Heart right ventricle (tissue), 16 donors: ENCODE measurements at regions of chr3 and their contacts with region 1.

Region 1: DNA sequence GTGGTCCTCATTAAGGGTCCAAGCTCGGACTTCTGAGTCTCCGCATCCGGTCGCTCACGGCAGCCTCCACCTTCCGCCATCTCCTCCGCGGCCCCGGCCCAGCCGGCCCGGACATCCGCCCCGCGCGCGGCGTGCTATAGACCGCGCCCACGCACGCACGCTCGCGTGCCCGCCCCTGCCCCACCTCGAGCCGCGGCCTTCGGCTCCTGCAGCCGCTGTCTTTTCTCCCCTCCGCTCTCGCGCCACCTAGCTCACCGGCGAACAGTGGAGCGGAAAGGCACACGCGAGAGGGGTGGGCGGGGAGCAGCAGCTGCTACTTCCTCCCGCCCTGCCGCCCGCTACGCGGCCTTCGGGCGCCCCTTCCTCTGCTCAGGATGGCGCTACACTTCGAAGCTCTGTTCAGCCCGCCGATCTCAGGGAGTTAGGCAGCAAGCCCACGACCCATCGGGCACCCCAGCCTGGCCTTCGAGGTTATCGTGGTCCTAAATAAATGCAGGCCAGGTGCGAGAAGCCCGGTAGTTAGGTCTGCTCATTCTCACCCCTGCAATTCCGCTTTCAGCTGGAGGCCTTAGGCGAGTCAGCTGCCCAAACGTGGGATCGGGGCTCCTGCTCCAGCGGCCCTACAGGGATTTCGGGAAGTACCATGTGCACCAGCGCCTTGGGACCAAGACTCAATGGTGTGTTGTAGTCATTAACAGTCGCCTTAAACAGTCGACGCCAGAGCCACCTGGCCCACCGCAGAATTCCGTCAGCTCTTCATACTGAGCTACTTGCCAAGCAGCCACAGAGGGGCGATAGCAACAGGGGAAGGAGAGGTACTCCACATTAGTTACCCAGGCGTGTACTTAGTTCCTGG is at the start of gene USP4:
- DNase-seq: peak; percentile 91
- ATAC-seq: peak; percentile 95 to 99 (median 96)
- H3K4me3 ChIP-seq: peak within 1 kb of the TSS; percentile 60 to 96 (median 78)
- H3K27ac ChIP-seq: peak within 1 kb of the TSS; percentile 94 to 99 (median 96)
- H3K4me1 ChIP-seq: peaks cover 8 to 77% (median 34%) of the 10 kb centered on the region in 9 donors
- H3K27me3 ChIP-seq: no peaks in the 10 kb centered on the region
- CTCF ChIP-seq: peak in 6 of 9 donors; percentile 20 to 72 (median 52)
- total RNA-seq, gene USP4: 35.4 to 48.3 (median 43.5) TPM

Region 2: GRCh38 chr3:49007068-49007770 is 333.0 kb before region 1 on chr3 and contains the start of gene WDR6:
- intact Hi-C with region 1: no loop called
- DNase-seq: peak; percentile 96 to 97
- ATAC-seq: peak; percentile 91 to 96 (median 93)
- H3K4me3 ChIP-seq: peak within 1 kb of the TSS; percentile 55 to 93 (median 72)
- H3K27ac ChIP-seq: peak within 1 kb of the TSS; percentile 80 to 97 (median 92)
- H3K4me1 ChIP-seq: peaks cover 4 to 32% (median 19%) of the 10 kb centered on the region in 9 donors
- H3K27me3 ChIP-seq: no peaks in the 10 kb centered on the region
- CTCF ChIP-seq: peak in 8 of 9 donors; percentile 9 to 70 (median 53)
- total RNA-seq, gene WDR6: 70.4 to 98.8 (median 76.5) TPM

Region 3: DNA sequence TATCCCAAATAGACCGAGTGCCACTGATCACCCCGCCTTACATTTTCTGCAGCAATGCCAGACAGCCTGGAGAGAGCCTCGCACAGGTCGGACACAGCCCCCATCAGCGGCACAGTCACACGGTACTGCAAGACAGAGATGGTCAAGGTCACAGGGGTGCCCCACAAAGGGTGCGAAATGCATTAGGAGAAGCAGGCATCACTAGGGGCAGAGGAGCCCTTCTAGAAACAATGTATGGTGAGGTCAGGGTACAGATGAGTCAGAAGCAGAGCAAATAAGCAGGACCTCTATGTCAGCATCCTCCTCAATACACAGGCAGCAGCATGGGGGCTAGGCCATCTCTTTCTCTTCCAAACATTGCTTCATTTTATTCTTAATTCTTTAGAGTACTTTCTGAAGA is 41.7 kb before region 1 on chr3:
- intact Hi-C with region 1: no loop called
- DNase-seq: no peak
- ATAC-seq: no peak
- H3K4me3 ChIP-seq: no peak overlapping the region
- H3K27ac ChIP-seq: peak overlapping the region in 1 of 10 donors; percentile 93
- H3K4me1 ChIP-seq: peaks cover 3 to 53% (median 25%) of the 10 kb centered on the region in 9 donors
- H3K27me3 ChIP-seq: no peaks in the 10 kb centered on the region
- CTCF ChIP-seq: no peak

Region 4: DNA sequence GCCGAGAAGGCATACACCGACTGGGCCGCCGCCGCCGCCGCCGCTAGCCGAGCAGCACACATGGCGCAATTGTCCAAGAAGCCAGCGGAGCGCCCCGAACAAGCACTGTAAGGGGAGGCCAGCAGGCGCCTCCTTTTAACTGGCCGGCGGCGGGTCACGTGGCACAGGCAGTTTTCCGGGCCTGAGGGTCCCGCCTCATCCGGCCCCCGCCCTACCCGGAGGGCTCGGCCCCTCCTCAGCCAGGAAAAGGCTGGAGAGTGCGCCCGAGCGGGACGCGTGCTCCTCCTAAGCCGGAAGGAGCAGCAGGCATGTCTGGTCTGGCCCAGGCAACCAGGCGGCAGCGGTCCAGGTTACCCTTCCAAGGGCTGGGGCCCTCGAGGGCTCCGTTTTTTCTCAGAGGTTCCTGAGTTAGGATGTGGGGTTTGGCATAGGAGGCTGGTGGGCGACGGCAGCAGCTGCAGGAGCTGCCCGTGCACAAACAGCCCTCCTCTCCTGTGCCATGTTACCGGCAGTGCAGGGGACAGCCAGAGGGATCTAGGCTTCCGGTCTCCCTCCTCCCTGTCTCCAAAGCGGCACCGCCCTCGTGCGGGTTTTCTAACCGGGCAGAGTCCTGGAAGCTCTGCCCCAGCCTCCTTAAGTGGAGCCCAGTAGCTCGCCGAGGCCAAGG is 18.2 kb after region 1 on chr3 and contains the start of gene GPX1:
- intact Hi-C with region 1: loop called in 1 of 10 experiments (anchors 2 kb)
- DNase-seq: peak; percentile 96
- ATAC-seq: peak; percentile 95 to 97 (median 97)
- H3K4me3 ChIP-seq: peak within 1 kb of the TSS; percentile 60 to 92 (median 81)
- H3K27ac ChIP-seq: peak within 1 kb of the TSS; percentile 74 to 96 (median 92)
- H3K4me1 ChIP-seq: peaks cover 6 to 53% (median 40%) of the 10 kb centered on the region in 9 donors
- H3K27me3 ChIP-seq: no peaks in the 10 kb centered on the region
- CTCF ChIP-seq: no peak
- total RNA-seq, gene GPX1: 85.2 to 223 (median 102) TPM

Region 5: GRCh38 chr3:49411968-49412631 is 71.9 kb after region 1 on chr3 and contains the starts of genes RHOA and TCTA:
- intact Hi-C with region 1: loop called in 6 of 10 experiments (anchors 1 to 5 kb)
- DNase-seq: peak; percentile 99 to 100
- ATAC-seq: peak; percentile 94 to 97 (median 96)
- H3K4me3 ChIP-seq: peak within 1 kb of the TSS; percentile 73 to 99 (median 91)
- H3K27ac ChIP-seq: peak within 1 kb of the TSS; percentile 95 to 99 (median 98)
- H3K4me1 ChIP-seq: peaks cover 11 to 78% (median 68%) of the 10 kb centered on the region in 9 donors
- H3K27me3 ChIP-seq: no peaks in the 10 kb centered on the region
- CTCF ChIP-seq: no peak
- total RNA-seq, gene RHOA: 226 to 335 (median 250) TPM
- total RNA-seq, gene TCTA: 13.9 to 22.6 (median 17.6) TPM

Region 6: DNA sequence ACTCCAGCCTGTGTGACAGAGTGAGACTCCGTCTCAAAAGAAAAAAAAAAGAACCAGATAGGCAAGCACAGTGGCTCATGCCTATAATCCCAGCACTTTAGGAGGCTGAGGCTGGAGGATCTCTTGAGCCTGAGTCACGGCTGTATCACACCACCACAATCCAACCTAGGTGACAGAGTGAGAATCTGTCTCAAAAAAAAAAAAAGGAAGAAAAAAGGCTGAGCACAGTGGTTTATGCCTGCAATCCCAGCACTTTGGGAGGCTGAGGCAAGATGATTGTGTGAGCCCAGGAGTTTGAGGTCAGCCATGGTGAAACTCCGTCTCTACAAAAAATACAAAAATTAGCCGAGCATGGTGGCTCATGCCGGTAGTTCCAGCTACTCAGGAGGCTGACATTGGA is 94.6 kb after region 1 on chr3:
- intact Hi-C with region 1: loop called in 1 of 10 experiments (anchors 5 kb)
- DNase-seq: no peak
- ATAC-seq: peak in 1 of 8 donors; percentile 36
- H3K4me3 ChIP-seq: no peak overlapping the region
- H3K27ac ChIP-seq: no peak overlapping the region
- H3K4me1 ChIP-seq: peaks cover 0 to 7% (median 3%) of the 10 kb centered on the region in 9 donors
- H3K27me3 ChIP-seq: no peaks in the 10 kb centered on the region
- CTCF ChIP-seq: no peak

Region 7: DNA sequence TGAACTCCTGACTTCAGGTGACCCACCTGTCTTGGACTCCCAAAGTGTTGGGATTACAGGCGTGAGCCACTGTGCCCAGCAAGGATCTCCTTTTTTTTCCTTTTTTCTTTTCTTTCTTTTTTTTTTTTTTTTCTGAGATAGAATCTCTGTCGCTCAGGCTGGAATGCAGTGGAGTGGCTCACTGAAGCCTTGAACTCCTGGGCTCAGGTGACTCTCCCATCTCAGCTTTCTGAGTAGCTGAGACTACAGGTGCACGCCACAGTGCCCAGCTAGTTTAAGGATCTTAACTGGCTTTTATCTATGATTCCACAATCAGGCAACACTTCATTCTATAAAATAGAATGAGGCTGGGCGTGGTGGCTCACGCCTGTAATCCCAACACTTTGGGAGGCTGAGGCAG is 105.2 kb after region 1 on chr3:
- intact Hi-C with region 1: loop called in 9 of 10 experiments (anchors 2 to 10 kb)
- DNase-seq: no peak
- ATAC-seq: no peak
- H3K4me3 ChIP-seq: no peak overlapping the region
- H3K27ac ChIP-seq: peak overlapping the region in 1 of 10 donors; percentile 86
- H3K4me1 ChIP-seq: peaks cover 0 to 35% (median 14%) of the 10 kb centered on the region in 9 donors
- H3K27me3 ChIP-seq: no peaks in the 10 kb centered on the region
- CTCF ChIP-seq: no peak

Region 8: GRCh38 chr3:49454458-49454857 is 114.3 kb after region 1 on chr3:
- intact Hi-C with region 1: loop called in 8 of 10 experiments (anchors 2 to 10 kb)
- DNase-seq: no peak
- ATAC-seq: peak in 6 of 8 donors; percentile 34 to 75 (median 65)
- H3K4me3 ChIP-seq: no peak overlapping the region
- H3K27ac ChIP-seq: peak overlapping the region in 8 of 10 donors; percentile 7 to 76 (median 54)
- H3K4me1 ChIP-seq: peaks cover 9 to 38% (median 19%) of the 10 kb centered on the region in 9 donors
- H3K27me3 ChIP-seq: no peaks in the 10 kb centered on the region
- CTCF ChIP-seq: peak in 8 of 9 donors; percentile 19 to 57 (median 38)

Region 9: DNA sequence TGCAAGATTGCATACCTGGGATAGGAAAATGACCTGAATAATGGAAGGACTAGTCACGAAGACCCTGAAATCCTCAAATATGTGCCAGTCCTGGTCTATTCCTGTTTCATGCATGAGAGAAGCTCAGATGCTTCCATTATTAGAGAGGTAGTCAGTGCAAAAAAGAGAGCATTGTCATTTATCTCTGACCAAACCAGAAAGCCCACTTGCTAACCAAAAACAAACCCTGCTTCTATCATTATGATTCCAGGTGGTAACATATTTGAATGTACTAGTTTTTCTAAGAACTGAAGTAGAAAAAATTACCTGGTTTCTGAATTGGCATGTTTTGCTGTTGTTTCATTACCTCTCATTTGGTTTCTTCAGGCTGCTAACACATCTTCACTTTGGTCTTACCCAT is 1884.1 kb after region 1 on chr3:
- intact Hi-C with region 1: no loop called
- DNase-seq: no peak
- ATAC-seq: no peak
- H3K4me3 ChIP-seq: no peak overlapping the region
- H3K27ac ChIP-seq: no peak overlapping the region
- H3K4me1 ChIP-seq: no peaks in the 10 kb centered on the region
- H3K27me3 ChIP-seq: no peaks in the 10 kb centered on the region
- CTCF ChIP-seq: no peak